Activated CD4-positive, alpha-beta memory T cell treated with anti-CD3 and anti-CD28 coated beads, Interleukin-2, amount 10 ng/mL, durations not matched to agents 7 days and 5 days (primary cell): ENCODE measurements at regions of chr14 and their contacts with region 1.

Region 1: DNA sequence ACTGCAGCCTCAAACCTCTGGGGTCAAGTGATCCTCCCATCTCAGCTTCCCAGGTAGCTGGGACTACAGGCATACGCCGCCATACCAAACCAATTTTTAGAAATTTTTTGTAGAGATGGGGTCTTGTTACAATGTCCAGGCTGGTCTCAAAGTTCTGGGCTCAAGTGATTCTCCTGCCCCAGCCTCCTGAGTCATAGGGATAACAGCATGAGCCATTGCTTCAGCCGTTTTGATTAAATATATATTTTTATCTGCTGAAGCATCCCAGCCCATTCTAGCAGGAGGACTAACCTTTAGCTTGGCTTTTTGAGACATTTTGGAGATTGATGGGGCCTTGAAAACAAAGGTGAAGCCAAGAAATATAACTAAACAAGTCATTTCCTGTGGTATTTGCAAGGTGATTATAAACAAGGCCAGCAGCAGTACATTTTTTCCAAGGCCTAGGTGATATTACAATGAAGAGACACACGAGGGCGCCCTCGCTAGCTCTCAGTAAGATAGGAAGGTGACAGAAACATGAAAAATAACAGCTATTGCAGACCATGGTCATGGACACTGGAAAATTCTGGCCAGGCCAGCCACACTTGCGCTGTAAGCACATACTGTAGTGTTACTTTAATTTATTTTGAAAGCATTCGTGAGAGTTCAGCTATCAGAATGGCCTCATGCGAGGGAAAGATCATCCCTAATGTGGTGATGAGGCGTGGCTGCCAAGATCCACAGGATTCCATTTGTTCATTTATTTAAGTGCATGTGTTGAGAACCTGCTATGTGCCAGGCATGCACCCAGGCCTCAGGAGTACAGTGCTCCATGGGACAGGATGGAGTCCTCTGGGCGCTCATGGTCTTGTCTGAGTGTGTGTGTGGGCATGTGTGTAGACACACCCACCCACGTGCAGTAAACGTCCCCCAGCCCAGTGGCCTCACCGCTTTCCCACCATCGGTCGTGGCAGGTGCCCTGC is 63.5 kb downstream of the DGLUCY start:
- DNase-seq: peak; percentile 79
- H3K4me3 Mint-ChIP-seq: no peak overlapping the region
- H3K27ac Mint-ChIP-seq: peak overlapping the region; percentile 77
- H3K4me1 Mint-ChIP-seq: peaks cover 25% of the 10 kb centered on the region
- H3K27me3 Mint-ChIP-seq: no peaks in the 10 kb centered on the region

Region 2: GRCh38 chr14:90903101-90903500 is 274.3 kb before region 1 on chr14:
- CTCF ChIA-PET with region 1: interaction called, 167 read pairs
- POLR2A ChIA-PET with region 1: interaction called, 4 read pairs
- DNase-seq: peak; percentile 66
- H3K4me3 Mint-ChIP-seq: no peak overlapping the region
- H3K27ac Mint-ChIP-seq: peak overlapping the region; percentile 21
- H3K4me1 Mint-ChIP-seq: peaks cover 30% of the 10 kb centered on the region
- H3K27me3 Mint-ChIP-seq: no peaks in the 10 kb centered on the region

Region 3: DNA sequence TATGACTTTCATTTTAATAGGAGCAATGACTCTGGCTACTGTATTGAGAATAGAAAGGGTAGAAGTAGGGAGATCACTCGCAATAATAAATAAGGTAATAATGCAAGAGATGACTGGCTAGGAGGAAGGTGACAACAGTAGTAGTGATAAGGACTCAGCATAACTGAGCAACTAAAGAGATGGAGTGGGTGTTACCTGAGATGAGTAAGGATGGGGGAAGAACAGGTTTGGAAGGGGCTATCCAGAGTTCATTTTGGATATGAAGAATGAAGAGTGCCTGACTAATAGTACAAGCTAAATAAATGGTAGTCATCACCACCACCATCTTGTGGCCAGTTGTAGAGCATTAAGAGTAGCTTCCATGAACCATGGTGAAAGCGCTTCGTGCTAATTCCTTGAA is 218.0 kb before region 1 on chr14:
- CTCF ChIA-PET with region 1: no interaction called
- POLR2A ChIA-PET with region 1: no interaction called
- DNase-seq: no peak
- H3K4me3 Mint-ChIP-seq: no peak overlapping the region
- H3K27ac Mint-ChIP-seq: no peak overlapping the region
- H3K4me1 Mint-ChIP-seq: peaks cover 6% of the 10 kb centered on the region
- H3K27me3 Mint-ChIP-seq: no peaks in the 10 kb centered on the region

Region 4: GRCh38 chr14:91060351-91061055 is 116.9 kb before region 1 on chr14 and contains the start of gene RPS6KA5:
- CTCF ChIA-PET with region 1: interaction called, 10 read pairs
- POLR2A ChIA-PET with region 1: interaction called, 12 read pairs
- DNase-seq: peak; percentile 100
- H3K4me3 Mint-ChIP-seq: peak within 1 kb of the TSS; percentile 86
- H3K27ac Mint-ChIP-seq: peak within 1 kb of the TSS; percentile 73
- H3K4me1 Mint-ChIP-seq: peaks cover 62% of the 10 kb centered on the region
- H3K27me3 Mint-ChIP-seq: no peaks in the 10 kb centered on the region
- total RNA-seq, gene RPS6KA5: 44.5 to 49.9 TPM

Region 5: GRCh38 chr14:91193069-91193468 is 15.7 kb after region 1 on chr14:
- CTCF ChIA-PET with region 1: interaction called, 41 read pairs
- POLR2A ChIA-PET with region 1: interaction called, 10 read pairs
- DNase-seq: no peak
- H3K4me3 Mint-ChIP-seq: no peak overlapping the region
- H3K27ac Mint-ChIP-seq: no peak overlapping the region
- H3K4me1 Mint-ChIP-seq: peaks cover 49% of the 10 kb centered on the region
- H3K27me3 Mint-ChIP-seq: no peaks in the 10 kb centered on the region

Region 6: GRCh38 chr14:91249841-91250616 is 72.7 kb after region 1 on chr14:
- CTCF ChIA-PET with region 1: interaction called, 56 read pairs
- POLR2A ChIA-PET with region 1: interaction called, 142 read pairs
- DNase-seq: peak; percentile 82
- H3K4me3 Mint-ChIP-seq: peak overlapping the region; percentile 49
- H3K27ac Mint-ChIP-seq: peak overlapping the region; percentile 97
- H3K4me1 Mint-ChIP-seq: peaks cover 89% of the 10 kb centered on the region
- H3K27me3 Mint-ChIP-seq: no peaks in the 10 kb centered on the region

Region 7: DNA sequence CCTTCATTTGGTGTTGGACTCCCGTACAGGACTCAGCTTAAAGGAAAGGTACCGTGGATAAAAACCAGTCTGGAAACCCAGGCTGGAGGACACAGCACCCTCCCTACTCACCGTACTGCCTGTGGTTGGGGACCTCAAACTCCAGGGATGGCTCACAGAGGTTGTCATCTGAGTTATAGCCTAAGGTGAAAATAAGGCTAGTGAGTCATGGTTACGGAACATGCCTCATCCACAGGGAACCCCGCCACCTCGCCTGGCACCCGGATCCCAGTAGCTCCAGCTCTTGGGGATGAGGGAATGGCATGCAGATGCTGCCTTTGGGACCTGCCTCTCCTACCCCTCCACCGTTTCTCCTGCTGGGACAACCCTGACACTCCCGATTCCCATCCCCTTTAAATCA is 104.0 kb after region 1 on chr14:
- CTCF ChIA-PET with region 1: interaction called, 136 read pairs
- POLR2A ChIA-PET with region 1: interaction called, 20 read pairs
- DNase-seq: no peak
- H3K4me3 Mint-ChIP-seq: no peak overlapping the region
- H3K27ac Mint-ChIP-seq: no peak overlapping the region
- H3K4me1 Mint-ChIP-seq: peaks cover 14% of the 10 kb centered on the region
- H3K27me3 Mint-ChIP-seq: no peaks in the 10 kb centered on the region